HepG2 (cell line): ENCODE measurements at regions of chr16 and their contacts with region 1.

Region 1: GRCh38 chr16:89171463-89172170 is at the start of gene CDH15:
- DNase-seq: peak; percentile 94
- ATAC-seq: peak; percentile 73
- H3K4me3 ChIP-seq: peak within 1 kb of the TSS in 2 of 3 experiments; percentile 30 to 69; a peak in 3 of 6 replicates
- H3K27ac ChIP-seq: no peak within 1 kb of the TSS
- H3K4me1 ChIP-seq: peaks cover 69% of the 10 kb centered on the region
- H3K27me3 ChIP-seq: peaks cover 57 to 89% of the 10 kb centered on the region in 2 experiments
- CTCF ChIP-seq: no peak
- EP300 ChIP-seq: no peak
- POLR2A ChIP-seq: no peak
- RAD21 ChIP-seq: peak; percentile 39; the same call in 1 of the 2 replicates
- total RNA-seq, gene CDH15: 1.4 and 2.2 TPM in 2 replicates

Region 2: GRCh38 chr16:88754912-88755744 is 416.5 kb before region 1 on chr16:
- CTCF ChIA-PET with region 1: no interaction called
- POLR2A ChIA-PET with region 1: no interaction called
- in situ Hi-C with region 1: loop called (anchors 5 kb)
- intact Hi-C with region 1: no loop called
- DNase-seq: no peak
- ATAC-seq: no peak
- H3K4me3 ChIP-seq: no peak overlapping the region
- H3K27ac ChIP-seq: no peak overlapping the region
- H3K4me1 ChIP-seq: peaks cover 17% of the 10 kb centered on the region
- H3K27me3 ChIP-seq: no peaks in the 10 kb centered on the region
- CTCF ChIP-seq: no peak
- EP300 ChIP-seq: no peak
- POLR2A ChIP-seq: no peak
- RAD21 ChIP-seq: no peak

Region 3: GRCh38 chr16:88838991-88839529 is 332.6 kb before region 1 on chr16:
- CTCF ChIA-PET with region 1: interaction called, 17 read pairs
- POLR2A ChIA-PET with region 1: no interaction called
- in situ Hi-C with region 1: no loop called
- intact Hi-C with region 1: no loop called
- DNase-seq: peak; percentile 71
- ATAC-seq: peak; percentile 33
- H3K4me3 ChIP-seq: no peak overlapping the region
- H3K27ac ChIP-seq: peak overlapping the region; percentile 7
- H3K4me1 ChIP-seq: no peaks in the 10 kb centered on the region
- H3K27me3 ChIP-seq: no peaks in the 10 kb centered on the region
- CTCF ChIP-seq: peak; percentile 93
- EP300 ChIP-seq: 0 out of 4 replicates have a peak, but pooled peaks of 1 of the 2 experiments have one; percentile 14
- POLR2A ChIP-seq: no peak
- RAD21 ChIP-seq: no peak; the same call in 1 of the 2 replicates

Region 4: GRCh38 chr16:88941913-88942909 is 229.4 kb before region 1 on chr16:
- CTCF ChIA-PET with region 1: interaction called, 13 read pairs
- POLR2A ChIA-PET with region 1: no interaction called
- in situ Hi-C with region 1: loop called (anchors 5 kb)
- intact Hi-C with region 1: loop called (anchors 5 kb)
- DNase-seq: no peak
- ATAC-seq: peak; percentile 60
- H3K4me3 ChIP-seq: no peak overlapping the region
- H3K27ac ChIP-seq: no peak overlapping the region
- H3K4me1 ChIP-seq: no peaks in the 10 kb centered on the region
- H3K27me3 ChIP-seq: peaks cover 49 to 85% of the 10 kb centered on the region in 2 experiments
- CTCF ChIP-seq: peak; percentile 77
- EP300 ChIP-seq: no peak
- POLR2A ChIP-seq: no peak
- RAD21 ChIP-seq: peak; percentile 90

Region 5: DNA sequence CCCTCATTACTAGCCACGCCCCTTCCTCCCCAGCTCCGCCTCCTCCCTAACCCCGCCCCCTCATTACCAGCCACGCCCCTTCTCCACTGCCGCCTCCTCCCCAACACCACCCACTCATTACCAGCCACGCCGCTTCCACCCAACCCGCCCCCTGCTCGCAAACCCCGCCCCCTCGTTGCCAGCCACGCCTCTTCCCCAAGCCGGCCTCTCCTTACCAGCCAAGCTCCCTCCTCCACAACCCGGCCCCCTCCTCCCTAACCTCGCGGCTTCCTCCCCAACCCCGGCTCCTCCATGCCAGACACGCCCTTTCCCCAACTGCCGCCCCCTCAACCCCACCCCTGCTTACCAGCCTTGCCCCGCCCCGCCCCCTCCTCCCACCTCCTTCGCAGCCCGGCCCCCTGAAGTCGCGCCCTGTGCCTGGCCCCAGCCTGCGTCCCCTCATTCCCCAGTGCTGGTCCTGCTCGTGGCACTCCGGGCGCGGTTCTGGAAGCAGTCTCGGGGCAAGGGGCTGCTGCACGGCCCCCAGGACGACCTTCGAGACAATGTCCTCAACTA is 21.5 kb after region 1 on chr16:
- CTCF ChIA-PET with region 1: no interaction called
- POLR2A ChIA-PET with region 1: interaction called, 10 read pairs
- in situ Hi-C with region 1: no loop called
- intact Hi-C with region 1: no loop called
- DNase-seq: peak; percentile 70
- ATAC-seq: peak; percentile 1; the same call in 2 of the 3 replicates
- H3K4me3 ChIP-seq: no peak overlapping the region
- H3K27ac ChIP-seq: peak overlapping the region; percentile 53
- H3K4me1 ChIP-seq: peaks cover 50% of the 10 kb centered on the region
- H3K27me3 ChIP-seq: no peaks in the 10 kb centered on the region; a peak in 1 of 5 replicates
- CTCF ChIP-seq: no peak
- EP300 ChIP-seq: no peak
- POLR2A ChIP-seq: no peak
- RAD21 ChIP-seq: no peak

Region 6: GRCh38 chr16:89217388-89218191 is 46.0 kb after region 1 on chr16 and contains the start of gene ZNF778:
- CTCF ChIA-PET with region 1: interaction called, 4 read pairs
- POLR2A ChIA-PET with region 1: interaction called, 3 read pairs
- in situ Hi-C with region 1: no loop called
- intact Hi-C with region 1: loop called (anchors 5 kb)
- DNase-seq: peak; percentile 77
- ATAC-seq: peak; percentile 92
- H3K4me3 ChIP-seq: peak within 1 kb of the TSS; percentile 89 to 96 (median 92)
- H3K27ac ChIP-seq: peak within 1 kb of the TSS; percentile 85
- H3K4me1 ChIP-seq: peaks cover 10% of the 10 kb centered on the region; the same call in 1 of the 2 replicates
- H3K27me3 ChIP-seq: no peaks in the 10 kb centered on the region; a peak in 1 of 5 replicates
- CTCF ChIP-seq: peak; percentile 24
- EP300 ChIP-seq: peak in 1 of 2 experiments; percentile 59; a peak in 1 of 4 replicates
- POLR2A ChIP-seq: peak; percentile 84 to 91
- RAD21 ChIP-seq: peak; percentile 65
- total RNA-seq, gene ZNF778: 7.2 and 9.3 TPM in 2 replicates